GM10248 (cell line): ENCODE measurements at regions of chr17 and their contacts with region 1.

Region 1: DNA sequence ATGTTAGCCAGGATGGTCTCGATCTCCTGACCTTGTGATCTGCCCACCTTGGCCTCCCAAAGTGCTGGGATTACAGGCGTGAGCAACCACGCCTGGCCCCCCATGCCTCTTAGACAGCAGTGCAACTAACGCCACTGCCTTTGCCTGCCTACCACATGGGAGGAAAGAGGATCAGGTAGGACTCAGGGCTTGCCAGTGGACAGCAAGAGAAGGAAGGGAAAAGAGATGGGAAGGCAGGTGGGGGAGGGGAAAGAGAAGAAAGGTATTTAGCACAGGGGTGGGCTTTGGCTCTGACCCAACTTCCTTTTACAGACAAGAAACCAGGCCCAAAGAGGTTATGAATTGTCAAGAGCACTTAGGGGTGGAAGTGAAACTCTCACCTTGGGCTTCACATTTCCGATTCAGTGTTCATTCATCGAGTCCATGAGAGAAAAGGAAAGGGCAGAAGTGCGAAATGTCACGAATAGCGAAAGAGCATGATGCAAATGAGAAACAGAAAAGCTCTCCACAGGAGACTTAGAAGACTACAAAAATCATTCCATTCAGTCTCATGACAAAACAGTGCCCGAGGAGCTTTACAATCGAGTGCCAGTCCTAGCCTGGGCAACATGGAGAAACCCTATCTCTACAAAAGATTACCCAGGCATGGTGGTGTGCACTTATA is 36.4 kb downstream of the CDK5R1 start:
- DNase-seq: peak; percentile 77
- CTCF ChIP-seq: no peak

Region 2: GRCh38 chr17:32495359-32496231 is 27.6 kb before region 1 on chr17:
- CTCF ChIA-PET with region 1: interaction called, 10 read pairs
- POLR2A ChIA-PET with region 1: interaction called, 4 read pairs
- DNase-seq: no peak
- CTCF ChIP-seq: no peak

Region 3: GRCh38 chr17:32503251-32504165 is 19.6 kb before region 1 on chr17:
- CTCF ChIA-PET with region 1: interaction called, 3 read pairs
- POLR2A ChIA-PET with region 1: interaction called, 14 read pairs
- DNase-seq: peak; percentile 81
- CTCF ChIP-seq: no peak

Region 4: DNA sequence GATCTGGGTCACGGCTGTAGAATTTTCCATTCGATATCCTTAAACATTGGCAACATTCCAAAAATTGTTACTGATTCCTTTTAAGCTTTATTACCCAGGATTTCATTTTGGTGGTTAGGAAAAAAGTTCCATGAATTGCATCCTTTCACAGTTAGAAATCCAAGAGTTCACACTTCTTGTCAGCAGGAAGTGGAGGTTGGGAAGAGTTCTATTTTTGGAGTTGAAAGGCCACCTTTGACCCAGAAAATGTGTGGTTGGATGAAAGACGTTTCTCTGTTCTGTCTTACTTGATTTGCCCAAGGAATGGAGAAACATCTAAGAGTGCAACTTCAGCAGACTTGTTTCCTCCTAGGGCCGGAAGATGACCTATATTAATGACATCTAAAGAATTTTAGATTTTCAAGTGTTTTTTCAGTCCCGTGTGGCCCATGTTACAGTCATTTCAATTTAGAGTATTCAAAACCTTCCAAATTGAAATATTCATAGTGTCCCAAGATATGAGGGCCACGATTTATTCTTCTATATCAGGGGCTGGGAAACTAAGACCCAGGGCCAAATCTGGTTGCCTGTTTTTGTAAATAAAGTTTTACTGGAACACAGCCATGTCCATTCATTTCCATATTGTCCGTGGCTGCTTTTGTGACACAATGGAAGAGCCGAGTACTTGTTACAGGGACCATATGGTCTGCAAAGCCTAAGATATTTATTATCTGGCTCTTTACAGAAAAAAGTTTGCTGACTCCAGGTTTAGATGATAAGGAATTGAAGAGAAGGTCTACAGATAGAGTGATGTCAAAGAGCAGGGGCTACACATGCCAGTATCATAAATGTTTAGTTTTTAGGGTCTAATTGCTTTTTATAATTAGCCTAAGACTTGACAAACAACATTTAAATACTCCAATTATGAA is 13.8 kb after region 1 on chr17:
- CTCF ChIA-PET with region 1: interaction called, 12 read pairs
- POLR2A ChIA-PET with region 1: no interaction called
- DNase-seq: no peak
- CTCF ChIP-seq: no peak

Region 5: DNA sequence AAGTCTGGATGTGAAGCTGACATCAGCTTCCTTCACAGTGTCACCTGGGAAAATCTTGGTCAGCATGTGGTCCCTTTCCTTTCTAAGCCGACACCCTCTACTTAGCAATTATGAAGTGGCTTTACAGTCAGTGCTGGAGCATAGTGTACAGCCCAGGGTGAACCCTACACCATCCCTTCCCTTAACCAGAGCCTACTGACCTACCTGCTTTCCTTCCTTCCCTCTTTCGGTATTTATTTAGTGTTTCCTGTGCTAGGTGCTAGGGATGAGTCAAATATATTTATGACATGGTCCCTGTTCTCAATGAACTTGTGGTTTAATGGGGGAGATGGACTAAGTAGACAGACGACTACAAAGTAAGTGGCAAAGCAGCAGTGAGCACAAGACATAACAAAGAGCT is 41.2 kb after region 1 on chr17:
- CTCF ChIA-PET with region 1: interaction called, 13 read pairs
- POLR2A ChIA-PET with region 1: interaction called, 12 read pairs
- DNase-seq: no peak
- CTCF ChIP-seq: no peak

Region 6: GRCh38 chr17:32569171-32570080 is 46.3 kb after region 1 on chr17:
- CTCF ChIA-PET with region 1: interaction called, 13 read pairs
- POLR2A ChIA-PET with region 1: interaction called, 12 read pairs
- DNase-seq: peak; percentile 66
- CTCF ChIP-seq: no peak